ENCODE measurements at regions of chr6 and their contacts with region 1.

Region 1: DNA sequence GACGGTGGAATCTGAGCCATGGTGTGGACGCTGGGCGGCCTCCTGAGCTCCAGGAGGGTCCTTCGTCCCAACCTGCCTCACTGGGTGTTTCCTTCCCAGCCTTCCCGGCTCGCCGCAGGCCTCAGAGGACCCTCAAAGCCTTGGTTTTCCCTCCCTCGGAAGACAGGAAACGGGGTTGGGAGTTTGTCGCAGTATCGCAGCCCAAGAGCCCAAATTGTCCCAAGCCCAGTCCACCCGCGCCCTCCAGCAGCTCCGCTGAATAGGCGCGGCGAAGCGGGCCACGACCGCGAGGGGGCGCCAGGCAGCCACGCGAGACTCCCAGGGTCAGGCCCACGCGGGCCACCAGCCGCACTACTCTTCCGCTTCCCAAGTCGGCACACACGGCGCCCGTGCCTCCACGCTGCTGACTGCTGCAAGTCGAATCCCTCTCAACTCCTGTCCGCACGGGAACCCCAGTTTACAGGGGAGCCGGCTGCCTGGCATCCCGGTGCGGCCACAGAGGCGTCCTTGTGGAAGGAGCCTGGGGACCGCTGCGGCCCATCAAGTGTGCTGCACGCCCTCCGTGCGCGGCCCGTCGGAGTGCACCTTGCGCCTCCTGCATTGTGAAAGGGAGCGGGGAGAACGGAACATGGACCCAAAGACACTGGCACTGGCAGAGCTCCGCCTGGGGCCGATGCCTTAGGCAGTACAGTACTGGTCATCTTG is 40.4 kb upstream of the HMGA1 start:
- DNase-seq: peak; percentile 94
- H3K4me3 ChIP-seq: peak overlapping the region; percentile 40 to 50
- H3K27ac ChIP-seq: no peak overlapping the region
- H3K4me1 ChIP-seq: peaks cover 0 to 8% of the 10 kb centered on the region in 2 experiments; a peak in 1 of 4 replicates
- H3K27me3 ChIP-seq: no peaks in the 10 kb centered on the region
- CTCF ChIP-seq: peak; percentile 89
- EP300 ChIP-seq: no peak
- RAD21 ChIP-seq: peak; percentile 85

Region 2: GRCh38 chr6:34174846-34175399 is 21.4 kb before region 1 on chr6:
- CTCF ChIA-PET with region 1: interaction called, 12 read pairs
- POLR2A ChIA-PET with region 1: no interaction called
- DNase-seq: no peak
- H3K4me3 ChIP-seq: no peak overlapping the region
- H3K27ac ChIP-seq: no peak overlapping the region
- H3K4me1 ChIP-seq: peaks cover 0 to 9% of the 10 kb centered on the region in 2 experiments; a peak in 1 of 4 replicates
- H3K27me3 ChIP-seq: no peaks in the 10 kb centered on the region
- CTCF ChIP-seq: no peak
- EP300 ChIP-seq: no peak
- RAD21 ChIP-seq: no peak

Region 3: DNA sequence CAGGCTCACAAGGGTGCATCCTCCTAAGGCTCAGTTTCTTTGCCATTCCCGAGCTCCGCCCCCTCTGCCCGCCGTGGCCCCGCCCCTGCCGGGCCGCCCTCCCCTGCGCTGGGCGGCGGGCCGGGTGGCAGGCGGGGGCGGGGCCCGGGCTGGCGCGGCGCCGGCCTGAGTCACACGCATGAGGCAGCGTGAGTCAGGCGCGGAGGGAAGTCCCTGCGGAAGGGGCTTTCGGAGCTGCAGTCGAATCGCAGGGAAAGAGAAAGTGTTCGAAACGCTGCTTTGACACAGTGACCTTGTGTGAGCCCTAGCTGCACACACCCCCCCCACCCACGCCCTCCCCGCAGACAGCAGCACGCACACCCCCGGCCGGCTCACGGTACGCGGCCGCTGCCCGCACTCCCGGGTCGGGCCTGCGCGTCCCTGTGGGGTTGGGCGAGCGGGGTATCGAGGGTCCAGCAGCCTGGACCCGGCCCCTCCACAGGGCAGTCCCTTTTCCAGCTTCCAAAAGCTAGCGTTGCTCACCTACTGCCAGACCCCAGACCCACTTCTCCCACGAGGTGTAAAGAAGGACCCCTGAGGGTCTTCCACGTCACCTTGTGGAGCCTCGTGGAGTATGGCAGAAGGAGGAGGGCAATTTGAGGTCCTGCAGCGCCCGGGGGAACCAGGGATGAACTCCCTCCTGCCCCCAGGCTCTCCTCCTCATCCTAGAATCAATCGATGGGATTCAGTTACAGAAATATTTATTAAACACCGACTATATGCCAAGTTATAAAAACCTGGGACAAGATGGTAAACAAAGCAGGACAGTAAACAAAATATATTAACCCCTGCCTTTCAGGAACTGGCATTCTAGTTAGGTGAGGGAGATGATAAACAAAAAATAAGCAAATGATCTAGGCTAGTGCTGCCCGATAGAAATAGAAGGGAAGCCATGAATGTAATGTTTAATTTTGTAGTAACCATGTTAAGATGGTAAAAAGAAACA is 28.0 kb after region 1 on chr6:
- CTCF ChIA-PET with region 1: interaction called, 13 read pairs
- POLR2A ChIA-PET with region 1: no interaction called
- DNase-seq: peak; percentile 99
- H3K4me3 ChIP-seq: peak overlapping the region; percentile 50 to 66
- H3K27ac ChIP-seq: peak overlapping the region; percentile 76 to 88
- H3K4me1 ChIP-seq: peaks cover 10% of the 10 kb centered on the region in 2 experiments; a peak in 3 of 4 replicates
- H3K27me3 ChIP-seq: no peaks in the 10 kb centered on the region
- CTCF ChIP-seq: no peak
- EP300 ChIP-seq: peak in 1 of 2 experiments; percentile 73; a peak in 1 of 4 replicates
- RAD21 ChIP-seq: no peak

Region 4: DNA sequence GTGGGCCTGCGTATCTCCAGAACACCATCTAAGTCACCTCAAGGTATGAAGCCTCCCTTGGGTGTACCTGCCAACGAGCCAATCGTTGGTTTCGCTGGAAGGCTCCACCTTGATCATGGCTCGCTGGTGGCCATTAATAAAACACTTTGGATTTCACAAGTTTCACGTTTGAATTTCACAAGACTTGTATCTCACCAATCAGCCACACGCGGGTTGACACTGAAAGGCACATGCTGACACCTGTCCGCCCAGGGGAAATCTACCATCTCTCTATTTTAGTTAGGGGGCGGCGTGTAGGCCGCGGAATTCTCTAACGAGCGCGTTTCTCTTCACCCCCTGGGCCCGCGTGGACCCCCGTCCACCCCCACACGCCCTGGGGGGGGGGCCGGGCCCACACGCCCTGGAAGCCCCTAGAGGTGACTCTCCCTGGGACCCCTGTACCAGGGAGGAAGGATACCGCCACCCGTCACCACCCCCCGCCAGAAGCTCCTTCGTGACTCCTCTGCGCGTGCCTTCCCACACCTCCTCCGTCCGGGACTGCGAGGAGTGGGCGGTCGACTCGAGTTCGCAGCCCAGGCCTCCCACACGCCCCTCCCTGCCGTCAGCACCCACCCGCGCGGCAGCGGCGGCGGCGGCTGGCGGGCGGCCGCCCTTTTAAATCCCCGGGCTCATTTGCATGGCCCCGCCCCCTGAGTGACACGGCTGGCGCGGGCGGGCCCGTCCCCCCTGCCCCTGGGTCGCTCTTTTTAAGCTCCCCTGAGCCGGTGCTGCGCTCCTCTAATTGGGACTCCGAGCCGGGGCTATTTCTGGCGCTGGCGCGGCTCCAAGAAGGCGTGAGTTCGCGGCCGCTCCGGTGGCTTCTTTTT is 40.1 kb after region 1 on chr6 and contains the start of gene HMGA1:
- CTCF ChIA-PET with region 1: interaction called, 18 read pairs
- POLR2A ChIA-PET with region 1: no interaction called
- DNase-seq: peak; percentile 99
- H3K4me3 ChIP-seq: peak within 1 kb of the TSS; percentile 80 to 82
- H3K27ac ChIP-seq: peak within 1 kb of the TSS; percentile 72 to 85
- H3K4me1 ChIP-seq: peaks cover 9 to 19% of the 10 kb centered on the region in 2 experiments
- H3K27me3 ChIP-seq: no peaks in the 10 kb centered on the region
- CTCF ChIP-seq: no peak
- EP300 ChIP-seq: no peak
- RAD21 ChIP-seq: no peak
- polyA plus RNA-seq, gene HMGA1: 185 and 433 TPM in 2 replicates

Region 5: GRCh38 chr6:34332251-34333198 is 136.2 kb after region 1 on chr6:
- CTCF ChIA-PET with region 1: no interaction called
- POLR2A ChIA-PET with region 1: no interaction called
- DNase-seq: no peak
- H3K4me3 ChIP-seq: no peak overlapping the region
- H3K27ac ChIP-seq: no peak overlapping the region
- H3K4me1 ChIP-seq: no peaks in the 10 kb centered on the region; a peak in 1 of 4 replicates
- H3K27me3 ChIP-seq: no peaks in the 10 kb centered on the region
- CTCF ChIP-seq: no peak
- EP300 ChIP-seq: no peak
- RAD21 ChIP-seq: no peak

Region 6: DNA sequence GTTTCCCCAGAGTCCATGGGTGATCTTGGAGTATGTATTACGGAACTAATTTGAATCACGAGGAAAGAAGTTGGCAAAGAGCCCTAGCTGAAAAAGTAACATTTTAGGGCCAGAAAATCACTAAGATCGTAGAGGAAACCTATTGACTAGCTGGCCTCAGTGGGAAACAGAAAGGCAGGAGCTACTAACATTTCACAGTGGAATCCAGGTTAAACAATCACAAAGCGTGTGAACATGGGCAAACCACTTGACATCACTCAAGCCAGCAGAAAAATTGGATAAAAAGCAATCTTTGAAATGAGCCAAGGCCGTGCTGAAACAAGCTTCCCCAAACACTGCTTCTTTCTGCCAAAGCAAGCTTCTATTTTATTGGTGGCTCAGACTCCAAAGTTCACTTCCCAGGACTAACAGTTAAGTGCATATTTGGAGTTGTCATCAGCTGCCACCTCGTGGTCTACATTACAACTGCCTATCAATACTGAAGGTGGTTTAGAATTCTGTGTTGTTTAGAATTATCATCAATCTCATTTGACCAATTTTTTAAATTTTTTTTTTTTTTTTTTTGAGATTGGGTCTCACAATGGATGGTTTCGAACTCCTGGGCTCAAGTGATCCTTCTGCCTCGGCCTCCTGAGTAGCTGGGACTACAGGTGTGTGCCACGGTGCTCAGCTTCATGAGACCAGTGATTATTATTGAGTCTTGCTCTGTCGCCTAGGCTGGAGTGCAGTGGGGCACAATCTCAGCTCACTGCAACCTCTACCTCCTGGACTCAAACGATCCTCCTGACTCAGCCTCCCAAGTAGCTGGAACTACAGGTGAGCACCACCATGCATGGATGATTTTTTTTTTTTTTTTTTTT is 219.0 kb after region 1 on chr6:
- CTCF ChIA-PET with region 1: interaction called, 40 read pairs
- POLR2A ChIA-PET with region 1: no interaction called
- DNase-seq: peak; percentile 47
- H3K4me3 ChIP-seq: no peak overlapping the region
- H3K27ac ChIP-seq: 0 out of 4 replicates have a peak overlapping the region, but pooled peaks of 1 of the 2 experiments have one; percentile 1
- H3K4me1 ChIP-seq: no peaks in the 10 kb centered on the region
- H3K27me3 ChIP-seq: no peaks in the 10 kb centered on the region
- CTCF ChIP-seq: peak; percentile 74
- EP300 ChIP-seq: no peak
- RAD21 ChIP-seq: peak; percentile 78

Measured in SK-N-SH (cell line).